ENCODE measurements at regions of chr20 and their contacts with region 1.

Region 1: GRCh38 chr20:62900052-62900691 is 26.1 kb downstream of the DIDO1 start:
- DNase-seq: peak; percentile 97
- H3K27ac ChIP-seq: peak overlapping the region; percentile 78
- CTCF ChIP-seq: peak; percentile 98

Region 2: GRCh38 chr20:62875419-62876361 is 24.5 kb before region 1 on chr20:
- CTCF ChIA-PET with region 1: interaction called, 14 read pairs
- POLR2A ChIA-PET with region 1: no interaction called
- DNase-seq: peak; percentile 81
- H3K27ac ChIP-seq: peak overlapping the region; percentile 80
- CTCF ChIP-seq: peak; percentile 66

Region 3: DNA sequence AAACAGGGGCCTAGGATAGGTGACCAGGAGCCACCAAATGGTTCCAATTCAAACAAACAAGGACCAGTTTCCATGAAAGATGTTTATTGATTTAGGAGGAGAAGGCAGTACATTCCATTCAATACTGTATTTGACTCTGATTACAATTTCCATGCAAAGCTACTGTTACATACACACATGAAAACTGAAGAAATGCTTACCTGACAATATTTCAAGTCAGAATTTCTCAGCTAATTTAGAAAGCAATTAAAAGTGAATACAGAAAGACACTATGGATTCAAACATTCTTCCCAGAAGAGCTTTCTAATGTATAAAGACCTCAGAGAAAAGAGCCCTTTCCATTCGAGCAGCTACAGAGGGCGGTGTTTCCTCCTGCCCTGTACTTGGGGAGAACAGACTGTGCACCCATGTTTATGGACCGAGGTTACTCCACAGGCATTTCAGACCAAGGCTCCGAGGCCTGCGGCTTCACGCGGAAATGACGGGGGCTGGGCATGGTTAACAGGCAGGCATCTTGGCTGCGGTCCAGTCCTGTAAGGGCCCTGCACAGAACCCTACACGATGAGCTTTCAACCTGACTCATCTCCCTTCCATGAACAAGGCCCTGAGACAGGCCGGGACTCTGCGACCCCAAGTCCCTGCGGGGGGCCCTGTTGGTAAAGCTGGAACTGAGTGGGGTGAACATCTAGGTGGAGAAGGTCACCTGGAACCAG is 12.9 kb before region 1 on chr20:
- CTCF ChIA-PET with region 1: interaction called, 33 read pairs
- POLR2A ChIA-PET with region 1: no interaction called
- DNase-seq: peak; percentile 96
- H3K27ac ChIP-seq: peak overlapping the region; percentile 75
- CTCF ChIP-seq: no peak

Region 4: GRCh38 chr20:62937366-62938104 is 37.4 kb after region 1 on chr20:
- CTCF ChIA-PET with region 1: interaction called, 12 read pairs
- POLR2A ChIA-PET with region 1: no interaction called
- DNase-seq: peak; percentile 99
- H3K27ac ChIP-seq: peak overlapping the region; percentile 90
- CTCF ChIP-seq: no peak

Region 5: DNA sequence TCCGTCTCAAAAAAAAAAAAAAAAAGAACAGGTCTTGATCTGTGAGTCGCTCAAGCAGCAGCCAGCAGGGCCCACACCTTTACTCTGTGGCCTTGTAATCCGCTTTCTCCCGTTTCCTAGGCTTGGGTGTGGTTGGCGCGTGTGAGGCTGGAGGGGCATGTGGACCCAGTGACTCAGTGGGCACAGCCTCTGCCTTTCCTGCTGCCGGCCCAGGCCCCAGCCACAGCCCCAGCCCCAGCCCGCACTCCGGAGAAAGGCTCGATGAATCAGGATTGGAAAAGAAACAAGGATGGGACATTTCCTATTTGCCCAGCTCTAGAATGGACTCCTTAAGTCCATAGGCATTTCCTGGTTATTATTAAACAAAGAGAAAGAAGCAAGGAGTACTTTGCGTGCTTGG is 102.3 kb after region 1 on chr20:
- CTCF ChIA-PET with region 1: interaction called, 10 read pairs
- POLR2A ChIA-PET with region 1: no interaction called
- DNase-seq: no peak
- H3K27ac ChIP-seq: no peak overlapping the region
- CTCF ChIP-seq: no peak

Measured in RWPE1 (cell line).